CD4-positive, alpha-beta memory T cell (primary cell): ENCODE measurements at regions of chr11 and their contacts with region 1.

Region 1: GRCh38 chr11:6619004-6619745 is at the start of gene TPP1:
- DNase-seq: peak; percentile 88 to 94 (median 91)
- H3K4me3 ChIP-seq: peak within 1 kb of the TSS; percentile 68 to 86
- H3K4me3 Mint-ChIP-seq: no peak within 1 kb of the TSS
- H3K27ac ChIP-seq: peak within 1 kb of the TSS; percentile 90
- H3K27ac Mint-ChIP-seq: no peak within 1 kb of the TSS
- H3K4me1 ChIP-seq: peaks cover 29% of the 10 kb centered on the region
- H3K4me1 Mint-ChIP-seq: peaks cover 6 to 12% (median 9%) of the 10 kb centered on the region in 4 donors
- H3K27me3 ChIP-seq: no peaks in the 10 kb centered on the region
- H3K27me3 Mint-ChIP-seq: no peaks in the 10 kb centered on the region
- total RNA-seq, gene TPP1: 194 to 198 TPM

Region 2: DNA sequence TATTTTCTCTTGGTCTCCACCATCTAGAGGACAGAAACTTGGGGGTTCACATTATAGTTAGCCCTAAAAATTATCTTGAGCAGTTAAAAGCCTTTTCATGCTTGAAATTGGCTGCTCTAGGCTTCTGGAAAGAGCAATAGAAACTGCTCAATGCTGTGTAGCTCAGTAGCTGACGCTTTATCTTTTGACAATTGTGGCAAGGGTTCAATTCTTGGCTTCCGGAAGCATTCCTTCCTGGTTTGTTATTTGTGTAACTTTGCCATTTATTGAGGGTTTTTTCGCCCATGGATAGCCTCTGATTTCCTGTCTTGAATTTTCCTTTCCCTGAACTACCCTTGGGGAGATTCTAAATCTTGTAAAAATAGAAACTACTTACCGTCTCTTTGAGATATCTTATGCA is 578.3 kb before region 1 on chr11:
- CTCF ChIA-PET with region 1: no interaction called
- POLR2A ChIA-PET with region 1: no interaction called
- intact Hi-C with region 1: no loop called
- DNase-seq: no peak
- H3K4me3 ChIP-seq: no peak overlapping the region
- H3K4me3 Mint-ChIP-seq: no peak overlapping the region
- H3K27ac ChIP-seq: no peak overlapping the region
- H3K27ac Mint-ChIP-seq: no peak overlapping the region
- H3K4me1 ChIP-seq: no peaks in the 10 kb centered on the region
- H3K4me1 Mint-ChIP-seq: no peaks in the 10 kb centered on the region
- H3K27me3 ChIP-seq: no peaks in the 10 kb centered on the region
- H3K27me3 Mint-ChIP-seq: peaks cover 8 to 14% of the 10 kb centered on the region in 2 donors

Region 3: DNA sequence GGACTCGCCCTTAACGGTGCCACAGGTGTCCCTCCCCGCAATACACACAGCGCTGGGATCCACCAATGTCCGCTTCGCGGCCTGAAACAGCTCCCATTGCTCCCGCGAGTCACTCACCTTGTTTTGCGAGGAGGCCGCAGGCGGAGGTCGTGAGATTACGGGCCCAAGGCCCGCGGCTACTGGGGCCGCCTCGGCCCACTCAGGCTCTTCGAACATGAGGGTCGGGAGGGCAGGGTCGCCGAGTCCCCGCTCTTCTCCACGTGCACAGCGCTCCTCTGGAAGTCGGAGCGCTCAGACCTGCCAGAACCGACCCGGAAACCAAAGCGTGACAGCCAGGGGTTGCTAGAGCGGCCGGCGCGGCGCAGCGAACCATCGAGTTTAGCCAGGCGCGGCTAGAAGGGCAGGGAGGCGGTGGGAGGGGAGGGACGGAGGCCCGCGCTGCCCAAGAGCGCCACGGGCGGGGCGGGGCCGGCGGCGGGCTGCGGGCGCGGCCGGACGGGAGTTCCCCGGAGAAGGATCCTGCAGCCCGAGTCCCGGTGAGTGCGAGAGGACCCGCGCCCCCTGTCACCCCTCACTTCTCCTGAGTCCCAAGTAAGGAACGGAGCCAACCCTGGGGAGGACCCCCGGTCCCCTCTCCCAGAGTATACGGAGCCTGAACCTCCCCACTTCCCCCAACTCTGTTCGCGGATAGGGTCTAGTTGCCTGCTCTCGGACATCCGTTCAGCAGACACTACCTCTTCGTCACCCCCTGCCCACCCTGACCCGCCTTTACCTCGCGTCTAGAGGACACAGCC is 15.7 kb before region 1 on chr11 and contains the starts of genes ILK and RRP8:
- CTCF ChIA-PET with region 1: interaction called, 72 read pairs
- POLR2A ChIA-PET with region 1: interaction called, 132 read pairs
- intact Hi-C with region 1: loop called (anchors 1 kb)
- DNase-seq: peak; percentile 82 to 86 (median 85)
- H3K4me3 ChIP-seq: peak within 1 kb of the TSS; percentile 94 to 96
- H3K4me3 Mint-ChIP-seq: no peak within 1 kb of the TSS
- H3K27ac ChIP-seq: peak within 1 kb of the TSS; percentile 85
- H3K27ac Mint-ChIP-seq: no peak within 1 kb of the TSS
- H3K4me1 ChIP-seq: peaks cover 62% of the 10 kb centered on the region
- H3K4me1 Mint-ChIP-seq: peaks cover 10 to 34% (median 20%) of the 10 kb centered on the region in 4 donors
- H3K27me3 ChIP-seq: no peaks in the 10 kb centered on the region
- H3K27me3 Mint-ChIP-seq: no peaks in the 10 kb centered on the region
- total RNA-seq, gene ILK: 131 to 132 TPM
- total RNA-seq, gene RRP8: 29.9 to 36.0 TPM

Region 4: GRCh38 chr11:6655020-6655789 is 36.0 kb after region 1 on chr11:
- CTCF ChIA-PET with region 1: interaction called, 19 read pairs
- POLR2A ChIA-PET with region 1: interaction called, 21 read pairs
- intact Hi-C with region 1: loop called (anchors 1 kb)
- DNase-seq: peak in 1 of 5 donors; percentile 50
- H3K4me3 ChIP-seq: peak overlapping the region in 1 of 2 donors; percentile 3
- H3K4me3 Mint-ChIP-seq: no peak overlapping the region
- H3K27ac ChIP-seq: no peak overlapping the region
- H3K27ac Mint-ChIP-seq: no peak overlapping the region
- H3K4me1 ChIP-seq: peaks cover 25% of the 10 kb centered on the region
- H3K4me1 Mint-ChIP-seq: peaks cover 0 to 8% (median 1%) of the 10 kb centered on the region in 4 donors
- H3K27me3 ChIP-seq: peaks cover 7% of the 10 kb centered on the region
- H3K27me3 Mint-ChIP-seq: peaks cover 0 to 2% of the 10 kb centered on the region in 2 donors

Region 5: DNA sequence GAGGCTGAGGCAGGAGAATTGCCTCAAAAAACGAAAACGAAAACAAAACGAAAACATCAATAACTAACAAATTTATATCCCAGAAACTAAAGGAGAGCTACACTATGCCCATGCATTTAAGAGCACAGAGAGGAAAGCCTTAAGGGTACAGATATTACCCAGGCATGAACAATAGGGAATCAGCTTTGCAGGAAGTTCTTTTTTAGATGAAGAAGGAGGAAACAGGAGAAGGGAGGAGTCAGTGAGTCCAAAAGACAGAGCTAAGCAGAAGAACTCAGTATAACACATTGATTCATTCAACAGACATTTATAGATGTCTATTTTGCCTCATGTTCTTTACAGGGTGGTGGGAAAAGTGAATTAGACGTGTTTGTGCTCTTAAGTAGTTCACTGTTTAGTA is 55.7 kb after region 1 on chr11:
- CTCF ChIA-PET with region 1: interaction called, 39 read pairs
- POLR2A ChIA-PET with region 1: interaction called, 172 read pairs
- intact Hi-C with region 1: no loop called
- DNase-seq: no peak
- H3K4me3 ChIP-seq: no peak overlapping the region
- H3K4me3 Mint-ChIP-seq: peak overlapping the region in 2 of 8 donors; percentile 26 to 82
- H3K27ac ChIP-seq: no peak overlapping the region
- H3K27ac Mint-ChIP-seq: peak overlapping the region in 1 of 7 donors; percentile 5
- H3K4me1 ChIP-seq: peaks cover 53% of the 10 kb centered on the region
- H3K4me1 Mint-ChIP-seq: peaks cover 43 to 70% (median 55%) of the 10 kb centered on the region in 4 donors
- H3K27me3 ChIP-seq: no peaks in the 10 kb centered on the region
- H3K27me3 Mint-ChIP-seq: no peaks in the 10 kb centered on the region

Region 6: GRCh38 chr11:6746086-6746618 is 127.0 kb after region 1 on chr11:
- CTCF ChIA-PET with region 1: interaction called, 20 read pairs
- POLR2A ChIA-PET with region 1: interaction called, 19 read pairs
- intact Hi-C with region 1: no loop called
- DNase-seq: peak; percentile 56 to 64 (median 61)
- H3K4me3 ChIP-seq: peak overlapping the region; percentile 60 to 75
- H3K4me3 Mint-ChIP-seq: no peak overlapping the region
- H3K27ac ChIP-seq: peak overlapping the region; percentile 79
- H3K27ac Mint-ChIP-seq: no peak overlapping the region
- H3K4me1 ChIP-seq: peaks cover 49% of the 10 kb centered on the region
- H3K4me1 Mint-ChIP-seq: peaks cover 31 to 39% (median 34%) of the 10 kb centered on the region in 4 donors
- H3K27me3 ChIP-seq: no peaks in the 10 kb centered on the region
- H3K27me3 Mint-ChIP-seq: no peaks in the 10 kb centered on the region

Region 7: DNA sequence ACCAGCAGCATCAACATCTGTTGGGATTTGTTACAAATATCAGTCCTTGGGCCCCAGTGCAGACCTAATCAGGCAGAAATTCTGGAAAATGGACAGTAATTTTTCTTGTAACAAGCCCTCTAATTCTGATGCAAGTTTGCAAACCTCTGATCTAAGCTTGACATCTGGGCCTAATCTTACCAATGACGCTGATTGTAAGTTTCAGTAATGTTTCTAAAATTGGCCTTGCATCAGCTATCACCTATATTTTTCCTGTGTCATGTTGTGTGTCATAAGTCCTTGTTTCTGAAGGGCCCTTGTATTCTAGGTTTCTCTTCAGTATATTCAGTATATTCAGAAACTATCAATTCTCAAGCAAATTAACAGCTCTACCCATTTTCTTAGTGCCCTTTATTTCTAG is 343.5 kb after region 1 on chr11:
- CTCF ChIA-PET with region 1: no interaction called
- POLR2A ChIA-PET with region 1: no interaction called
- intact Hi-C with region 1: no loop called
- DNase-seq: no peak
- H3K4me3 ChIP-seq: no peak overlapping the region
- H3K4me3 Mint-ChIP-seq: no peak overlapping the region
- H3K27ac ChIP-seq: no peak overlapping the region
- H3K27ac Mint-ChIP-seq: no peak overlapping the region
- H3K4me1 ChIP-seq: no peaks in the 10 kb centered on the region
- H3K4me1 Mint-ChIP-seq: no peaks in the 10 kb centered on the region
- H3K27me3 ChIP-seq: no peaks in the 10 kb centered on the region
- H3K27me3 Mint-ChIP-seq: peaks cover 0 to 2% of the 10 kb centered on the region in 2 donors

Region 8: DNA sequence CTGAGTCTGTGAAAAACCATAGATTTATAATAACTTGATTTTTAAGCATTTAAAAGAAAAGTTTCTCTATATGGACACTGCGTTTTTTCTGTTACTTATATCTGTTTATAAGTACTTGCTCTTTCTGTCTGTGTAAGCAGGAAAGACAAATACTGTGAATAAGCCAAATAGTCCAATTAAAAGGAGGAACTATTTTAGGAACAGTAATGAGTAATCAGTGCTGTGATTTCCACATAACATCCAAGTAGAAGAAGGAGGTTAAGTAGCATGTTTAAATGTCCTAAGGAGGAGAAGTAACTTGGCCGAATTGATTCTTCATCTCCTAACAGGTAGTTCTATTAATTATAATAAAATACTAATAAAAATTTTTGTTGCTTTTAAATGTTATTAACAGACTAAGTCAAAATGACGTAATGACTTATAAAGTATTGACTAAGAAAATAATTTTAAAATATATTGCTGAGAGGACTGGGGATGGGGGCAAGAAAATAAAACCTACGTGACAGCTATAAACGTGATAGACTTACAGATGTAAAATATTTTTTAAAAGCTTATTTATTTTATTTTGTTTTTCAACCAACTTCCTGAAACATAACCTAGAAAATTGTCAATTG is 360.3 kb after region 1 on chr11:
- CTCF ChIA-PET with region 1: no interaction called
- POLR2A ChIA-PET with region 1: no interaction called
- intact Hi-C with region 1: no loop called
- DNase-seq: no peak
- H3K4me3 ChIP-seq: no peak overlapping the region
- H3K4me3 Mint-ChIP-seq: no peak overlapping the region
- H3K27ac ChIP-seq: no peak overlapping the region
- H3K27ac Mint-ChIP-seq: no peak overlapping the region
- H3K4me1 ChIP-seq: no peaks in the 10 kb centered on the region
- H3K4me1 Mint-ChIP-seq: no peaks in the 10 kb centered on the region
- H3K27me3 ChIP-seq: no peaks in the 10 kb centered on the region
- H3K27me3 Mint-ChIP-seq: peaks cover 1 to 5% of the 10 kb centered on the region in 2 donors